Left cardiac atrium (tissue), 4 donors: ENCODE measurements at regions of chr1 and their contacts with region 1.

Region 1: DNA sequence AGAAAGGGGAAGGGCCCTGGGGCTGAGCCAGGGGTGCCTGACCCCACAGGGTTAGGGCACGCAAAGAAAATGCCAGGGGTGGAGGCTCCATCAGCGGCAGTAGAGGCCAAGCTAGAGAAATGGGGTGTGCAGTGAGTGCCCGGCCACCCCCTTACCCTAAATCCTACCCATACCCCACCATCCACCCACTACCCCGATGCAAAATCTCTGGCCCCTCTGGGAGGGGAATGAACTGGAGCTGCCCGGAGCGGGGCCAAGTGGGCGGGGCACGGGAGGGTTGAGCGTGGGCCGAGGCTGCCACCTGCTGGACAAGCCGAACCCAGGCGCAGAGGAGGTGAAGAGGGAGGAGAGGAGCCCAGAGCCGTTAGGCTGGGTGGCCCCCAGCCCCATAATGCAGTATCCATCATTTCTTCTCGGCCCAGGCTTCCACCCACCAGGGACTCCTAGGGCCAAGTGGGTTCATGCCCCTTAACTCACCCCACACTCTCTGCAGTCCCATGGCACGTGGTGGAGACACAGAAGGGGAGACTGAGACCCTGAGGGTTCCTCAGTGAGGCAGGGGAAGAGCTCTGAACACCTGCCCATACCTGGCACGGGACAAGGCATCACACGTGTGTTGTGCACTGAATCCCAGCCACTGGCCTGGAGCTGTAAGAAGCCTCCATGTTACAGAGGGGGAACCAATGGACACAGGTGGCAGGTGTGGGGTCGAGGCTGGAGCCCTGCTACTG is 1.4 kb upstream of the C1QC start:
- DNase-seq: peak; percentile 90
- ATAC-seq: peak; percentile 79 to 88

Region 2: GRCh38 chr1:22416555-22417454 is 225.3 kb before region 1 on chr1:
- intact Hi-C with region 1: loop called (anchors 1 to 2 kb)
- DNase-seq: peak; percentile 67
- ATAC-seq: peak; percentile 47 to 59

Region 3: GRCh38 chr1:22426781-22427180 is 215.3 kb before region 1 on chr1:
- intact Hi-C with region 1: loop called in 1 of 2 experiments (anchors 2 kb)
- DNase-seq: no peak
- ATAC-seq: no peak

Region 4: DNA sequence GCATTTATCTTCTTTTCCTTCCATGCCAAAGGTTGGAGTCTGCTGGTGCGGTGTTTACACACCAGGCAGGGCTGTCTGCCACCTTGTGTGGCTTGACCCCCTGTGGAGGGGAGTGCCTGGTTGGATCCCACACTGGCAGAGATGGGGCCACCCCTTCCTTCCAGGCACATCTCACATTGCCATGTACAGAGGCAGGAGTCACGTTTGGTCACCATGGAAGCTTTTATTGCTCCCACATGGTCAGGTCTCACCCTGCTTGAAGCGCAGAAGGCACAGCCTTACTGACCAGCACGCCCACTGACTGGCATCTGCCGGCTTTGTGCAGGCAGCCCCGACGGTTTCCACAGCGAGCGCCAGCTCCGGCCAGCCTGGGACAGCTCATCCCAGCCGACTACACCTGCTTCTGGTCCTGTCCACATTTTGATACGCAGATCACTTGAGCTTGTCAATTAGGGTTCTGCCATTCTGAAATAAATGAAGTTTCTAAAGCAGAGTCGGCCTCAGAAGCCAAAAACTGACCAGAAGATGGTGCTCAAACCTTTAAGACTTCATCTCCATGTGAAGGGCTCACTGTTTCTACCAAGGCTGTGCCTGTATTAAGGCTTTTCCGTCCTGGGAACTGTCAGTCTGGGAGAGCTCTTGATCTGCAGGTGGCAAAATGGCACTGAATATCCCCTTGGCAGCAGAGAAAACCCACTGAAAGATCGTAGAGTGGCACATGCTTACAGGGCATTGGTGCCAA is 114.3 kb before region 1 on chr1:
- intact Hi-C with region 1: loop called in 1 of 2 experiments (anchors 10 kb)
- DNase-seq: no peak
- ATAC-seq: no peak

Region 5: DNA sequence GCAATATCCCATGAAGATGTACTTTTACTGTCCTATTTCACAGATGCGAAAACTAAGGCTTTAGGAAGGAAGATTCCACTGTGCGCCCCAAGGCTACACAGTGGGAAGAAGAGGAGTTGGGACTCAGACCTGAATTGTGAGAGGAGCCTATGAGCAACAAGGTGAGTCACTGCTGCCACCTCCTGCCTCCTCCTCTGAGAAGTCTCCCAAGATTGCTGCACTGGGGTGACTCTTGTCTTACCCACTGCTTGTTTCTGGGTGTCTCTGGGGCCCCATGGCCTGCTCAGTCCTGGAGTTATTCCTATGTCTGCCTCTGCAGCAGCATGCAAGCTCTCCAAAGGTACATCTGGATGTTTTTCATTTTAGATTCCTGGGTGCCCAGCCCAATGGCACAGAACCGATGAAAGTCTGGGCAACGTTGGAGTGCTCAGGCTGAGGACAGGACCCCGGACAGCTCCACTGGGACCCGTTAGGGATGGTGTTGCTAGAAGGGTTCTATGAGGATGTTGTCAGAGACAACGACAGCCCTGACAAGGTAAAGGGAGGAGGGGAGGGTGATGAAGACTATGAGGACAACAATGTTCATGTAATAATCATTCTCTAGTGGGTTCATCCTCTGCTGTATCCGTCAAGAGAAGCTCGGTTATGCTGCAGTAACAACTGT is 16.7 kb before region 1 on chr1:
- intact Hi-C with region 1: no loop called
- DNase-seq: no peak
- ATAC-seq: no peak